ENCODE measurements at regions of chr11 and their contacts with region 1.

Region 1: DNA sequence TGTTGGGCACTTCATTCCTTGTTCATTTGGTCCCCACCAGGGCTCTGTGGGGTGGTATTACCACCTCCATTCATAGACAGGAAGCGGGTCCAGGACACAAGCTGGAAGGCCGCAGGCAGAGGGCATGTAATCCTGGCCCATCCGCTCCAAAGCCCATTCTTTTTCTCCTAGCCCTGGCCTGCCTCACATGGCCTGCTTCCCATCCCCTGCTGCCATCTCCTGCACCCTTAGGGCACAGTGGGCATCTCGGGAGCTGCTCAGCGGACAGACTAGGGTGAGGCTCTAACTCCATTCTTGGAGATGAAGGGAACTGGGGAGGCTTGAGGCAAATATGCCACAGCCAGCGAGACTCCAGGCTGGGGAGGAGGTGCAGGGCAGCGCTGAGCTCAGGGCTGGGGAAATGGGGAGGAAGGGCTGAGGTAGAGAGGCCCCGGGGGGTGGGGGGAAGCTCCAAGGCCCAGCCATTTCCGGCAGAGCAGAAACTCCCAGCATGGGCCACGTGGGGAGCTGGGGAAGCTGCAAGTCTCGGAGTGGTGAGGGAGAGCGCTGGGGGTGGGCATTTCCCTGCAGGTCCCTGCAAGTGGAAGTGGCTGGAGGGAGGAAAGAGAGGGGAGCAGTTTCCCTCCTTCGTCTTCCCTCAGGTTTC is 14.3 kb upstream of the BCL9L start:
- DNase-seq: peak in 1 of 2 experiments; percentile 19
- H3K4me3 ChIP-seq: no peak overlapping the region
- H3K27ac ChIP-seq: no peak overlapping the region
- H3K4me1 ChIP-seq: peaks cover 19% of the 10 kb centered on the region
- H3K27me3 ChIP-seq: no peaks in the 10 kb centered on the region
- CTCF ChIP-seq: no peak

Region 2: DNA sequence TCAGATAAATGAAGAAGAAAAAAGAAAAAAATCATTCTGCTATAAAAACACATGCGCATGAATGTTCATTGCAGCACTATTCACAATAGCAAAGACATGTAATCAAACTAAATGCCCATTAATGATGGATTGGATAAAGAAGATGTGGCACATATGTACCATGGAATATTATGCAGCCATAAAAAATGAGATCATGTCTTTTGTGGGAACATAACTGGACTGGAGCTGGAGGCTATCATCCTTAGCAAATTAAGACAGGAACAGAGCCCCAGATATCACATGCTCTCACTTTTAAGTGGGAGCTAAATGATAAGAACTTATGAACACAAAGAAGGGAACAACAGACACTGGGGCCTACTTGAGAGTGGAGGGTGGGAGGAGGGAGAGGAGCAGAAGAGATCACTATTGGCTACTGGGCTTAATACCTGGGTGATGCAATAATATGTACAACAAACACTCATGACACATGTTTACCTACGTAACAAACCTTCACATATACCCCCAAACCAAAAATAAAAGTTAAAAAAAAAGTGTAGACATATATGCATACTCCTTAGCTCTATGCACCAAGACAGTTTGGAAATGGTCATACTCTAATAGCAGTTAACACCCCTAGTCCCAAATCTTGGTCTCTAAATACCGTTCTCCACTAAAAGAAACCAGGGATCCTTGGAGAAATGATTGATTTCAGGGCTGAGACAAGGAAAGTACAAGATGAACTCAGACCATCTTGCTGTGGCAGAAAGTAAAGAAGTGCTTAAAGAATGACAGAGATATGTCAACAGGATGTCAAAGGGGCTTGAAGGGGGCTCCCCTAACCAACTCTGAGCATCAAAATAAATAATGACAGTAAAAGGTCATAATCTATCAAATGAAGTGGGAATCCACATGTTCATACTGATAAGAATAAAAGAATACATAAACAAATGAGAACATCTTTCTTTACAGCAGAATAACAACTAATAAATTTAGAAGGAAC is 132.0 kb before region 1 on chr11:
- CTCF ChIA-PET with region 1: no interaction called
- POLR2A ChIA-PET with region 1: interaction called, 14 read pairs
- intact Hi-C with region 1: no loop called
- DNase-seq: no peak
- H3K4me3 ChIP-seq: no peak overlapping the region
- H3K27ac ChIP-seq: no peak overlapping the region
- H3K4me1 ChIP-seq: no peaks in the 10 kb centered on the region
- H3K27me3 ChIP-seq: no peaks in the 10 kb centered on the region
- CTCF ChIP-seq: no peak

Region 3: DNA sequence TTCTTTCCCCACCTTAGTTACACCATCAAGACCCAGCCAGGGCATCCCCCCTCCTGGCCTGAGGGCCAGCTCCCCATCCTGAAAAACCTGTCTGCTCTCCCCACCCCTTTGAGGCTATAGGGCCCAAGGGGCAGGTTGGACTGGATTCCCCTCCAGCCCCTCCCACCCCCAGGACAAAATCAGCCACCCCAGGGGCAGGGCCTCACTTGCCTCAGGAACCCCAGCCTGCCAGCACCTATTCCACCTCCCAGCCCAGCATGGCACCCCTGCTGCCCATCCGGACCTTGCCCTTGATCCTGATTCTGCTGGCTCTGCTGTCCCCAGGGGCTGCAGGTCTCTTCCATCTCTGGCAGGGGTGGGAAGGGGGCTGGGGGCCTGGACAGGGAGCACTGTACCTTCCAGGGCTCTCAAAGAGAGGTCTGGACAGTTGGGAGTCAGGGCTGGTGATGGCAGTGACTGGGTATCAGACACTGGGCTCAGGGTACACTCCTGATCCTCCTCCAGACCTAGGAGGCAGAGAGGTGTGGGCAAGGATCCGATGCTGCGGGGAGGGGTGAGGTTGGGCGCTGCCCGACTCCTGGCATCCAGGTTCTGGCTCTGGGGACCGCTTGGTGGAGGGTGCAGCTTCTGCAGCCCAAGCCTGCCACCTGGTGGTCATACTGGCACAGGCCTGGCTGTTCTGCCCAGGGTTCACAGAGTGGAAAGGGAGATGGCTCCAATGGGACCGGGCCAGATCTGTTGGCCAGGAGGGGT is 16.2 kb after region 1 on chr11 and contains the start of gene UPK2:
- CTCF ChIA-PET with region 1: no interaction called
- POLR2A ChIA-PET with region 1: no interaction called
- intact Hi-C with region 1: loop called (anchors 2 kb)
- DNase-seq: peak; percentile 92 to 93
- H3K4me3 ChIP-seq: peak within 1 kb of the TSS; percentile 49
- H3K27ac ChIP-seq: peak within 1 kb of the TSS; percentile 62
- H3K4me1 ChIP-seq: peaks cover 26% of the 10 kb centered on the region
- H3K27me3 ChIP-seq: no peaks in the 10 kb centered on the region
- CTCF ChIP-seq: peak; percentile 97
- total RNA-seq, gene UPK2: 17.1 and 23.2 TPM in 2 replicates

Measured in PC-9 (cell line).